ENCODE measurements at regions of chr1 and their contacts with region 1.

Region 1: GRCh38 chr1:197180252-197180878 is 33.9 kb upstream of the ASPM start:
- DNase-seq: peak; percentile 45
- H3K4me3 ChIP-seq: no peak overlapping the region
- H3K27ac ChIP-seq: no peak overlapping the region
- H3K4me1 ChIP-seq: no peaks in the 10 kb centered on the region
- H3K27me3 ChIP-seq: no peaks in the 10 kb centered on the region
- CTCF ChIP-seq: peak; percentile 52 to 63

Region 2: GRCh38 chr1:197116156-197116555 is 64.2 kb before region 1 on chr1:
- CTCF ChIA-PET with region 1: no interaction called
- dilution Hi-C with region 1: no loop called
- in situ Hi-C with region 1: no loop called
- intact Hi-C with region 1: no loop called
- DNase-seq: no peak
- H3K4me3 ChIP-seq: no peak overlapping the region
- H3K27ac ChIP-seq: no peak overlapping the region
- H3K4me1 ChIP-seq: no peaks in the 10 kb centered on the region
- H3K27me3 ChIP-seq: no peaks in the 10 kb centered on the region
- CTCF ChIP-seq: no peak

Region 3: GRCh38 chr1:197268012-197268411 is 87.6 kb after region 1 on chr1 and contains the start of gene CRB1:
- CTCF ChIA-PET with region 1: no interaction called
- dilution Hi-C with region 1: no loop called
- in situ Hi-C with region 1: no loop called
- intact Hi-C with region 1: no loop called
- DNase-seq: no peak
- H3K4me3 ChIP-seq: no peak within 1 kb of the TSS
- H3K27ac ChIP-seq: no peak within 1 kb of the TSS
- H3K4me1 ChIP-seq: no peaks in the 10 kb centered on the region
- H3K27me3 ChIP-seq: peaks cover 5% of the 10 kb centered on the region
- CTCF ChIP-seq: no peak
- total RNA-seq, gene CRB1: under 0.01 TPM in 1 of 2 donors, not detected in the other

Region 4: GRCh38 chr1:197327776-197328364 is 147.5 kb after region 1 on chr1:
- CTCF ChIA-PET with region 1: no interaction called
- dilution Hi-C with region 1: no loop called
- in situ Hi-C with region 1: no loop called
- intact Hi-C with region 1: loop called (anchors 5 kb)
- DNase-seq: no peak
- H3K4me3 ChIP-seq: no peak overlapping the region
- H3K27ac ChIP-seq: no peak overlapping the region
- H3K4me1 ChIP-seq: no peaks in the 10 kb centered on the region
- H3K27me3 ChIP-seq: no peaks in the 10 kb centered on the region
- CTCF ChIP-seq: peak; percentile 55 to 59

Measured in mammary epithelial cell (primary cell).